ENCODE measurements at regions of chr6 and their contacts with region 1.

Region 1: GRCh38 chr6:56292505-56293181 is 45.3 kb upstream of the COL21A1 start:
- DNase-seq: peak; percentile 35
- H3K4me3 ChIP-seq: no peak overlapping the region
- H3K27ac ChIP-seq: no peak overlapping the region
- H3K4me1 ChIP-seq: no peaks in the 10 kb centered on the region
- H3K27me3 ChIP-seq: no peaks in the 10 kb centered on the region
- CTCF ChIP-seq: peak; percentile 48

Region 2: GRCh38 chr6:55983861-55984260 is 308.8 kb before region 1 on chr6:
- intact Hi-C with region 1: loop called (anchors 2 kb)
- DNase-seq: no peak
- H3K4me3 ChIP-seq: no peak overlapping the region
- H3K27ac ChIP-seq: no peak overlapping the region
- H3K4me1 ChIP-seq: no peaks in the 10 kb centered on the region
- H3K27me3 ChIP-seq: no peaks in the 10 kb centered on the region
- CTCF ChIP-seq: no peak

Measured in colonic mucosa (tissue), 4 donors.